ENCODE measurements at regions of chr14 and their contacts with region 1.

Region 1: GRCh38 chr14:69460093-69460701 is 24.3 kb upstream of the PLEKHD1 start:
- DNase-seq: peak; percentile 50
- H3K4me3 ChIP-seq: no peak overlapping the region
- H3K27me3 ChIP-seq: no peaks in the 10 kb centered on the region
- CTCF ChIP-seq: peak; percentile 83

Region 2: DNA sequence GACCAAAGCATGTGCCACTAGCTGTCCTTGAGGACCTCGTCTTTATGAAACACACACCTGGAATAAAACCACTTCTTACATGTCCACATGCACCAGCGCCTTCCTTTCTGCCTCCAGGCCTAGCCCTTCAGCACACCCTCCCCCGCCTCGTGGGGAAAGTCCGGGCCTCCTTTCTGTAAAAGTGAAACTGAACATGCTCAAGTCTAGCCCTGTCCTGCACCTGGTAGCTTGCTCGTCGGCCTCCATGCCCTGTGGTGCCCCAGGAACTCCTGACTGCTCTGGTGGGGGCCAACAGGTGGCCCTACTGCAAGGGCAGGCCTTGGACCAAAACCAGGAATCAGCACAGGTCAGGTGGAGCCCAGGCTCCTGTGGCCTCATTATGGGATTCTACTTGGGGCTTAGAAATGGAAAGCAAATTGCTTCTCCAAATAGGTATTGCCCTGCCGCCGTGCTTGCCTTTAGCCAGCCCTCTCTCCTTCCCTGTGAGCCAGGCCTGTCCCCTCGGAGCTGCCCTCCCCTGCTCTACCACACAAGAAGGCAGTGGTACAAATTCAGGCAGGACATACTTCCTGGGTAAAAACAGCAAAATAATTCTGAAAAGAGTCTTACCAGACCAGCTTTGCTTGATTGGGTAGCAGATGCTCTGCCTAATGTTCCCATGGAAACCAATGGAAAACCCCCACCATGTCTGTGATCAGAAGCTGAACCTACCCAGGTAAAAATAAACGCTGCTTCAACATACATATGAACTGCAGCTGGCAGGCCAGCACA is 105.6 kb before region 1 on chr14:
- CTCF ChIA-PET with region 1: no interaction called
- POLR2A ChIA-PET with region 1: no interaction called
- DNase-seq: no peak
- H3K4me3 ChIP-seq: no peak overlapping the region
- H3K27me3 ChIP-seq: peaks cover 1% of the 10 kb centered on the region; the same call in 1 of the 2 replicates
- CTCF ChIP-seq: no peak

Region 3: GRCh38 chr14:69398053-69398817 is 62.0 kb before region 1 on chr14 and contains the starts of genes ERH and SLC39A9:
- CTCF ChIA-PET with region 1: interaction called, 13 read pairs
- POLR2A ChIA-PET with region 1: interaction called, 4 read pairs
- DNase-seq: peak; percentile 82
- H3K4me3 ChIP-seq: peak within 1 kb of the TSS; percentile 99
- H3K27me3 ChIP-seq: no peaks in the 10 kb centered on the region
- CTCF ChIP-seq: no peak
- polyA plus RNA-seq, gene ERH: 43.1 and 109 TPM in 2 replicates
- polyA plus RNA-seq, gene SLC39A9: 70.3 and 86.3 TPM in 2 replicates

Measured in BJ (cell line).